CD4-positive, alpha-beta memory T cell (primary cell): ENCODE measurements at regions of chr7 and their contacts with region 1.

Region 1: GRCh38 chr7:87886875-87887274 is 10.6 kb downstream of the DBF4 start:
- DNase-seq: peak in 4 of 5 donors; percentile 41 to 50 (median 44)
- H3K4me3 ChIP-seq: no peak overlapping the region
- H3K4me3 Mint-ChIP-seq: no peak overlapping the region
- H3K27ac ChIP-seq: no peak overlapping the region
- H3K27ac Mint-ChIP-seq: no peak overlapping the region
- H3K4me1 ChIP-seq: no peaks in the 10 kb centered on the region
- H3K4me1 Mint-ChIP-seq: peaks cover 0 to 14% (median 11%) of the 10 kb centered on the region in 4 donors
- H3K27me3 ChIP-seq: no peaks in the 10 kb centered on the region
- H3K27me3 Mint-ChIP-seq: no peaks in the 10 kb centered on the region

Region 2: DNA sequence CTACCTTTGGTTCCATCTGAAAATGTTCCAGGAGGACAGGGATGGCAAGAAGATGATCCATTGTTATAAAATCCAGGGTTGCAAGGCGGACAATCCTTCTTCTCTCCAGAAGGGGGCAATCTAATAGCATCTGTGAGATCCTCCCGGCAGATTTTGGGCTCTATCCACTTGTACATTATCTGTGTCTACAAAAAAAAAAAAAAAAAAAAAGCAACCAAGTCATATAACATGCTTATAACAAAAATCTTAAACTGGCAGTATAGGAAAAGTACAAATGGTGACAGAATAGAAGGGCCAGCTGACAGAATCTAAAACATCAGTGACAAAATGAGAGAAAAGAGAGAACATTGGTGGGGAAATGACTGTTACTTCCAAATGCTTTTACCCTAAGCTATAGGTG is 960.1 kb before region 1 on chr7:
- CTCF ChIA-PET with region 1: no interaction called
- POLR2A ChIA-PET with region 1: no interaction called
- intact Hi-C with region 1: loop called (anchors 10 kb)
- DNase-seq: peak in 4 of 5 donors; percentile 39 to 60 (median 53)
- H3K4me3 ChIP-seq: no peak overlapping the region
- H3K4me3 Mint-ChIP-seq: no peak overlapping the region
- H3K27ac ChIP-seq: no peak overlapping the region
- H3K27ac Mint-ChIP-seq: peak overlapping the region in 1 of 7 donors; percentile 63
- H3K4me1 ChIP-seq: no peaks in the 10 kb centered on the region
- H3K4me1 Mint-ChIP-seq: no peaks in the 10 kb centered on the region
- H3K27me3 ChIP-seq: no peaks in the 10 kb centered on the region
- H3K27me3 Mint-ChIP-seq: peaks cover 0 to 3% of the 10 kb centered on the region in 2 donors

Region 3: DNA sequence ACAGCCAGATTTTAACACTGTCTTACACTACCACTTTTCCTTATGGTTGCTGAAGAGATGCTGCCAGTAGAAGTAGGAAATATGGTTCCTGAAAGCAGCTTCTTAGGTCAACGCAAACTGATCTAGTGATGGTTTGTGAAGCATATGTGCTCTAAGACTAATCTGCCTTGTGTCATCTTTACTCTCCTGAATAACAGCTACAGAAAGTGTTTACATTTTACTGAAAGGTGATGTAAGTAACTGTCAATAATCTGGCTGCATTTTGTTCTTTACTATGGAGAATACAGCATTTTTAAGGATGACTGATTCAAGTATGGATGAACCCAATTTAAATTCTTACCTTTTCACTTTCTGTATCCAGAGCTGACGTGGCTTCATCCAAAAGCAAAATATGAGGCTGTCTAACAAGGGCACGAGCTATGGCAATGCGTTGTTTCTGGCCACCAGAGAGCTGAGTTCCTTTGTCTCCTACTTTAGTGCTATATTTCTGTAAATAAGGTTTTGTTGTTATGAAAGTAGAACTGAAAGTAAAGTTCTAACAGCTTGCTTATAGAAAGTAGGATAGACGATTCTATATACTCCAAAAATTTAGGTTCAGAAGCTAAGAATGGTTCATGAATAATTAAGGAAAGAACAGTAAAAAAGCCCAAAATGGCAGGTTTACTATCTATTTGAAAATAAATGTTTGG is 381.2 kb before region 1 on chr7:
- CTCF ChIA-PET with region 1: interaction called, 8 read pairs
- POLR2A ChIA-PET with region 1: no interaction called
- intact Hi-C with region 1: loop called (anchors 1 kb)
- DNase-seq: no peak
- H3K4me3 ChIP-seq: no peak overlapping the region
- H3K4me3 Mint-ChIP-seq: no peak overlapping the region
- H3K27ac ChIP-seq: no peak overlapping the region
- H3K27ac Mint-ChIP-seq: no peak overlapping the region
- H3K4me1 ChIP-seq: no peaks in the 10 kb centered on the region
- H3K4me1 Mint-ChIP-seq: peaks cover 0 to 2% (median under 1%) of the 10 kb centered on the region in 4 donors
- H3K27me3 ChIP-seq: no peaks in the 10 kb centered on the region
- H3K27me3 Mint-ChIP-seq: peaks cover 0 to 5% of the 10 kb centered on the region in 2 donors

Region 4: GRCh38 chr7:87797798-87798403 is 89.0 kb before region 1 on chr7:
- CTCF ChIA-PET with region 1: interaction called, 36 read pairs
- POLR2A ChIA-PET with region 1: no interaction called
- intact Hi-C with region 1: loop called (anchors 1 kb)
- DNase-seq: peak in 4 of 5 donors; percentile 34 to 43 (median 37)
- H3K4me3 ChIP-seq: no peak overlapping the region
- H3K4me3 Mint-ChIP-seq: no peak overlapping the region
- H3K27ac ChIP-seq: no peak overlapping the region
- H3K27ac Mint-ChIP-seq: no peak overlapping the region
- H3K4me1 ChIP-seq: no peaks in the 10 kb centered on the region
- H3K4me1 Mint-ChIP-seq: no peaks in the 10 kb centered on the region
- H3K27me3 ChIP-seq: no peaks in the 10 kb centered on the region
- H3K27me3 Mint-ChIP-seq: peaks cover 5 to 8% of the 10 kb centered on the region in 2 donors